Thyroid gland (tissue), 4 donors: ENCODE measurements at regions of chr15 and their contacts with region 1.

Region 1: DNA sequence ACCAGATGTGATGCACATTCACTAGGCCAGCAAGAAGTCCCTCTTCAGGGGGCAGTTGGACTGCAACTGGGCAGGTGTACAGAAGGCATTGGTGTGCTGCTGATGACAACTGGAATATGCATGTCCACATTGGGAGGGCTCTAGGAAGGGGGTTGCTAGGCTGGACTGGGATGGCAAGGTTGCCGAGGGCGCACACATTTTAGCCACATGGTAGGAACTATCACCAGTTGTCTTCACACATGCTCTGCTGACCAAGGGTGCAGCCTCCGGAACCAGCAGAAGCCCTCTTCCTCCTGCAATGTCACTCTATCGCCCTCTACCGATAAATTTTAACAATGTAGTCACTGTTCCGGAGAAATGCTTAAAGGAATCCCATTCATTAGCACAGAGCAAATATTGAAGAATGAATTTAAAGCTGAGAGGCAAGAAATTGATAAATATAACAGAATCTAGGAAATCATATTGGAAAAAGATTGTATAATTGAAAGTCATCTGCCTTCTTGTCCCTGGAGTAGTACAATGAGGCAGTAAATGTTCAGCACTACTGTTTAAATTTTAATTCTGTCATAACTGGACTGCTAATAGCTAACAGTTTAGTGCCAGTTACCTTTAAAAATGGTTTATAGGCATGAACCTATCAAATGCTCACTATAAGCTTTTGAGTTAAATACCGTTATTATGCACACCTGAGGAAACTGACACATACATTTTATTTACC is 22.6 kb upstream of the LYSMD4 start:
- DNase-seq: peak; percentile 41 to 45
- H3K4me3 ChIP-seq: no peak overlapping the region
- H3K27ac ChIP-seq: no peak overlapping the region
- H3K4me1 ChIP-seq: no peaks in the 10 kb centered on the region
- H3K27me3 ChIP-seq: no peaks in the 10 kb centered on the region
- CTCF ChIP-seq: peak; percentile 39 to 88 (median 76)
- POLR2A ChIP-seq: no peak

Region 2: GRCh38 chr15:99273801-99274200 is 482.1 kb before region 1 on chr15:
- intact Hi-C with region 1: loop called (anchors 5 kb)
- DNase-seq: no peak
- H3K4me3 ChIP-seq: no peak overlapping the region
- H3K27ac ChIP-seq: no peak overlapping the region
- H3K4me1 ChIP-seq: no peaks in the 10 kb centered on the region
- H3K27me3 ChIP-seq: no peaks in the 10 kb centered on the region
- CTCF ChIP-seq: no peak
- POLR2A ChIP-seq: no peak